H1 (cell line): ENCODE measurements at regions of chr7 and their contacts with region 1.

Region 1: DNA sequence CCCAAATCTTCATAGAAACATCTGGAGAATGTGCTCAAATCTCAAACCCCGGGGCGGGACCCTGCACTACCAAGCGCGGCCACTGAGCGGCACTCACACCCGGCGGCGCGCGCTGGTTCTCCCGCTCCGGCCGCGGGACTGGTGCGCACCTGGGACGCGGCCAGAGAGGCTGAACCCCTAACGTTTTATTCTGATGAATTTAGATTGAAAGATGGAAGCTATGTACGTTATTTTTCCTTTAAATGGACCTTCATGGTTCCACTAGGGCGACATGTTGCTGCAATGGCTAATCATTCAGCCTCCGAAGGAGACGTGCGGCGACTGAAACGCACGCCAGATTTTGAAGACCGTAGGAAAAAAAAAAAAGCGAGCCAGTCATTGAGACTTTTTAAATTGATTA is 107.0 kb upstream of the INSIG1 start:
- DNase-seq: peak in 1 of 2 experiments; percentile 95
- H3K4me3 ChIP-seq: peak overlapping the region in 1 of 4 experiments; percentile 33; a peak in 1 of 8 replicates
- H3K27ac ChIP-seq: no peak overlapping the region
- H3K4me1 ChIP-seq: no peaks in the 10 kb centered on the region; a peak in 1 of 7 replicates
- H3K27me3 ChIP-seq: peaks cover 0 to 3% (median 0%) of the 10 kb centered on the region in 4 experiments; a peak in 1 of 7 replicates
- CTCF ChIP-seq: peak; percentile 73 to 86 (median 85)
- EP300 ChIP-seq: no peak
- POLR2A ChIP-seq: no peak
- RAD21 ChIP-seq: peak; percentile 79 to 93

Region 2: DNA sequence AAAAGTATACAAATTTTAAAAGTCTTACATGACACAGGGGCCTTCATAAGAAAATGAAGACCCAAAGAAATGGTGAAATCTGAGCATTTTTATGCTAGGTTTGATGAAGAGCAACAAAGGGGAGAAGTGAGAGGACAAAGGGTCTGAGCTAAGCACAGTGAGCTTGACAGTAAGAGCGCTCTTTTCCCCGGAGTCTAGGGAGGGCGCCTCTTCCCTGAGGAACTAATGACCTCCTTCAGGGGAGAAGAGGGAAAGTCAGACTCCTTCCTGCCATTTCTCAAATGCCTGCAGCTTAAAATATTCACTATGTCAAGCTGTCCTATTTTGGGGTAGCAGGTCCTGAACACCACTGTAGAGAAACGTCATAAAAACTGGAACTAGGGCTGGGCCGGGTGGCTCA is 169.7 kb before region 1 on chr7:
- CTCF ChIA-PET with region 1: interaction called, 10 read pairs
- POLR2A ChIA-PET with region 1: no interaction called
- DNase-seq: peak in 1 of 2 experiments; percentile 42
- H3K4me3 ChIP-seq: no peak overlapping the region
- H3K27ac ChIP-seq: no peak overlapping the region
- H3K4me1 ChIP-seq: no peaks in the 10 kb centered on the region; a peak in 2 of 7 replicates
- H3K27me3 ChIP-seq: no peaks in the 10 kb centered on the region
- CTCF ChIP-seq: peak; percentile 34 to 54 (median 36); a peak in 3 of 4 replicates
- EP300 ChIP-seq: no peak
- POLR2A ChIP-seq: no peak
- RAD21 ChIP-seq: peak; percentile 57 to 58

Region 3: DNA sequence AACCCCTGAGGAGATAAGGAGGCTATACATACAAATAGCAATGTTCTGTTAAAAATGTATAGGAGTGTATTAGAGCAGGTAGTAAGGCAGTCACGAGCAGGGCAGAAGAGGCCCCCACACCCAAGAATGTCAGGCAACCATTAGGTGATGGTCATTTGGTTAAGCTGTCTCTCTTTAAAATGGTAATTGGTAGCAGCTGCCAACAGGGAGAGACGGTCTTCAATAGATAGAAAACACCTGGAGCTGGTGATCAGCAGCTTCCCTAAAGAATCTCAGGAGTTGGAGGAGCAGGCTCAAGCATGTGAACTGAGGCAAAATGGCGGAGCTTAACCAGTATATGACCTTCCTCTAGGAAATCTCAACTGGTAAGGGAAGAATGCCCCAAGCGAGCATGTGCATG is 146.9 kb before region 1 on chr7:
- CTCF ChIA-PET with region 1: no interaction called
- POLR2A ChIA-PET with region 1: no interaction called
- DNase-seq: no peak
- H3K4me3 ChIP-seq: no peak overlapping the region
- H3K27ac ChIP-seq: no peak overlapping the region
- H3K4me1 ChIP-seq: peaks cover 0 to 6% (median 1%) of the 10 kb centered on the region in 4 experiments; a peak in 2 of 7 replicates
- H3K27me3 ChIP-seq: no peaks in the 10 kb centered on the region; a peak in 1 of 7 replicates
- CTCF ChIP-seq: no peak
- EP300 ChIP-seq: no peak
- POLR2A ChIP-seq: no peak
- RAD21 ChIP-seq: no peak

Region 4: DNA sequence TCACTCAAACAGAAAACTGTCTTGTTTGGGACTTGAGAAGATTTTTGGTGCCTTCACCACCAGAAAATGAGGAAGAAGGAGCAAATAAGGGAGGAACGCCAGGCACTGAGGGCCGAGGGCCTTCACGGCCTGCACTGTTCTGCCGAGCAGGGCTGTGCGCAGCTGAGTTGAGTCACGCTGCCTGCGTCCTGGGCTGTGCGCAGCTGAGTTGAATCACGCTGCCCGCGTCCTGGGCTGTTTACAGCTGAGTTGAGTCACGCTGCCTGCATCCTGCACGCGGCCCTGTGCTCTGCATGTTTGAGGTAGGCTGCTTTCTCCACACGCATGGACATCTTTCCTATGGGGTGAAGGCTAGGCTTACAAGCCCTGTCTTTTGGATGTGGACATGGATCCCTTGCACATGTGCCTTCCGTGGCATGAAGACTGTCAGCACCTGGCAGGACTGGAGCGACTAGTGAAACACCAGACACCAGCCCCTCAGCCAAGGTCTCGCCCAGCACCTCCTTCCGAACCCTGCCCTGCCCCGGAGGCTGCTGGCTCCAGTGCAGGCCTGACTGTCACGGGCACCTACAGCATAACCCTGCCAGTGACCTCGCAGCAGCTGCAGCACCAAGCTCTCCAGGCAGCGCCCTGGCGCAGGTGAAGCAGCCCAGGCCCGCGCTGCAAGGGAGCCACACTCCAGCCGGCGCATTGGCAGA is 23.9 kb before region 1 on chr7:
- CTCF ChIA-PET with region 1: interaction called, 22 read pairs
- POLR2A ChIA-PET with region 1: no interaction called
- DNase-seq: no peak
- H3K4me3 ChIP-seq: no peak overlapping the region
- H3K27ac ChIP-seq: no peak overlapping the region
- H3K4me1 ChIP-seq: no peaks in the 10 kb centered on the region; a peak in 1 of 7 replicates
- H3K27me3 ChIP-seq: no peaks in the 10 kb centered on the region
- CTCF ChIP-seq: no peak
- EP300 ChIP-seq: no peak
- POLR2A ChIP-seq: no peak
- RAD21 ChIP-seq: no peak

Region 5: GRCh38 chr7:155213955-155214740 is 23.5 kb after region 1 on chr7:
- CTCF ChIA-PET with region 1: interaction called, 14 read pairs
- POLR2A ChIA-PET with region 1: no interaction called
- DNase-seq: no peak
- H3K4me3 ChIP-seq: no peak overlapping the region
- H3K27ac ChIP-seq: no peak overlapping the region
- H3K4me1 ChIP-seq: peaks cover 0 to 10% (median 6%) of the 10 kb centered on the region in 4 experiments; a peak in 5 of 7 replicates
- H3K27me3 ChIP-seq: no peaks in the 10 kb centered on the region
- CTCF ChIP-seq: no peak
- EP300 ChIP-seq: no peak
- POLR2A ChIP-seq: no peak
- RAD21 ChIP-seq: no peak

Region 6: GRCh38 chr7:155227981-155228811 is 37.5 kb after region 1 on chr7:
- CTCF ChIA-PET with region 1: interaction called, 10 read pairs
- POLR2A ChIA-PET with region 1: no interaction called
- DNase-seq: peak in 1 of 2 experiments; percentile 53
- H3K4me3 ChIP-seq: no peak overlapping the region
- H3K27ac ChIP-seq: no peak overlapping the region
- H3K4me1 ChIP-seq: peaks cover 0 to 25% (median 18%) of the 10 kb centered on the region in 4 experiments; a peak in 6 of 7 replicates
- H3K27me3 ChIP-seq: peaks cover 0 to 15% (median 7%) of the 10 kb centered on the region in 4 experiments; a peak in 5 of 7 replicates
- CTCF ChIP-seq: no peak
- EP300 ChIP-seq: no peak
- POLR2A ChIP-seq: no peak
- RAD21 ChIP-seq: no peak

Region 7: GRCh38 chr7:155344600-155345433 is 154.1 kb after region 1 on chr7:
- CTCF ChIA-PET with region 1: interaction called, 21 read pairs
- POLR2A ChIA-PET with region 1: no interaction called
- DNase-seq: peak; percentile 19 to 91
- H3K4me3 ChIP-seq: peak overlapping the region; percentile 22 to 66 (median 34)
- H3K27ac ChIP-seq: no peak overlapping the region
- H3K4me1 ChIP-seq: peaks cover 0 to 8% (median 2%) of the 10 kb centered on the region in 4 experiments; a peak in 3 of 7 replicates
- H3K27me3 ChIP-seq: peaks cover 4 to 12% (median 6%) of the 10 kb centered on the region in 4 experiments; a peak in 6 of 7 replicates
- CTCF ChIP-seq: peak; percentile 80 to 96 (median 89)
- EP300 ChIP-seq: no peak
- POLR2A ChIP-seq: no peak
- RAD21 ChIP-seq: peak; percentile 68 to 89